ENCODE measurements at regions of chr19 and their contacts with region 1.

Region 1: DNA sequence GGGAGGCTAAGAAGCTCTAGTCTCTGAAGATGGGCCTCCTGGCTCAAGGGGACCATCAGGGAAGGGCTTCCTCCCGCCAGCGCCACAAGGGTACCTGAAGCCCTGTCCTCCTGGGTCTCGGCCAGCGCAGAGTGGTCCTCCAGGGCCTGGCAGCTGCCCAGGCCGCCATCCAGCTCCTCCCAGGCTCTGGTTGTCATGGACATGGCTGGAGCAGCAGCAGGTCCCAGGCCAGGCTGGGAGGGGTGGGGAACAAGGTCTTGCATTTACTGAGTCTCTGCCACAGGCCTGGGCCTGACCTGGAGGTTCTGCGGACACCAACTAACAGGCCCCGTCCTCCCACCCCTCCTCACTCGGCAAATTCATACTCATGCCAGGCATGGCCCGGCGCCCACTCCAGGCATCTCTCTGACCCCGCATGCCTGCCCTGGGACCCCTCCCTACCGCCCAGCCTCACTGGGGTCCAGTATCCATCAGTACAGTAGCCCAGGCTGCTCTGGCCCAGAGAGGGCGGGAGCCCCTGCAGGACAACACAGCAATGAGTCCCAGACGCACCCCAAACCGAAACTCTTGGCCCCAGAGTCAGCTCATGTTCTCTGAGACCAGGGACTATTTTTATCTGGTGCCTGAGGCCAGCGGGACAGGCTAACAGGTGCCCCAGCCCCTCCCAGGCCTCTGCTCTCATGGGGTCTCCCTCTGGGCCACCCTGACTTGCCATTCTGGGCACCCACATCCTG is 938 bp downstream of the JSRP1 start:
- DNase-seq: no peak
- H3K4me3 ChIP-seq: no peak overlapping the region
- H3K27ac ChIP-seq: no peak overlapping the region
- H3K4me1 ChIP-seq: no peaks in the 10 kb centered on the region
- H3K27me3 ChIP-seq: no peaks in the 10 kb centered on the region
- CTCF ChIP-seq: no peak

Region 2: DNA sequence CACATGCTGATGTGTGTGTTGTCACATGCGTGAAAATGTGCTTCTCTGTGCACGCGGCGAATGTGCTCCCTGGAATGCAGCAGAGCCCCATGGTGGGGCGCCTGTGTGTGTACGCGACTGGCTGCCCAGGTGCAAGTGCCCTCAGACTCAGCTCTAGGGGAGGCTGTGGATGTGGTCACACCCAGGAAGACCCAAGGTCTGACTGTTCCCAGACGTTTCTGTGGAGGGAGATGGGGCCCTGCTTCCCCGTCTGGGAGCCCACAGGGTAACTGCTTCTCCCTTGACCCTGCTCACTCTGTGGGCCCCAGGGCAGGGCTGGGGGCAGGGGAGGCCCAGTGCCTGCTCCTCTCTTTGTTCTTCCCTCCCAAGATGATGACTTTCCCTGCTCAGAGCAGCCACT is 642.1 kb before region 1 on chr19:
- CTCF ChIA-PET with region 1: no interaction called
- POLR2A ChIA-PET with region 1: interaction called, 32 read pairs
- intact Hi-C with region 1: no loop called
- DNase-seq: no peak
- H3K4me3 ChIP-seq: no peak overlapping the region
- H3K27ac ChIP-seq: no peak overlapping the region
- H3K4me1 ChIP-seq: no peaks in the 10 kb centered on the region
- H3K27me3 ChIP-seq: no peaks in the 10 kb centered on the region
- CTCF ChIP-seq: no peak

Region 3: GRCh38 chr19:2135474-2136402 is 119.5 kb before region 1 on chr19:
- CTCF ChIA-PET with region 1: no interaction called
- POLR2A ChIA-PET with region 1: no interaction called
- intact Hi-C with region 1: no loop called
- DNase-seq: no peak
- H3K4me3 ChIP-seq: no peak overlapping the region
- H3K27ac ChIP-seq: no peak overlapping the region
- H3K4me1 ChIP-seq: no peaks in the 10 kb centered on the region
- H3K27me3 ChIP-seq: no peaks in the 10 kb centered on the region
- CTCF ChIP-seq: no peak

Region 4: GRCh38 chr19:2199215-2199614 is 56.1 kb before region 1 on chr19:
- CTCF ChIA-PET with region 1: no interaction called
- POLR2A ChIA-PET with region 1: no interaction called
- intact Hi-C with region 1: no loop called
- DNase-seq: no peak
- H3K4me3 ChIP-seq: no peak overlapping the region
- H3K27ac ChIP-seq: no peak overlapping the region
- H3K4me1 ChIP-seq: no peaks in the 10 kb centered on the region
- H3K27me3 ChIP-seq: no peaks in the 10 kb centered on the region
- CTCF ChIP-seq: peak; percentile 27; the same call in 1 of the 2 replicates

Measured in A673 (cell line).